Activated CD4-positive, alpha-beta memory T cell treated with anti-CD3 and anti-CD28 coated beads for 36 hours (primary cell): ENCODE measurements at regions of chr19 and their contacts with region 1.

Region 1: GRCh38 chr19:13846557-13847406 is 30.2 kb upstream of the NANOS3 start:
- DNase-seq: peak; percentile 98
- H3K4me3 Mint-ChIP-seq: peak overlapping the region; percentile 78
- H3K27ac Mint-ChIP-seq: peak overlapping the region; percentile 97
- H3K4me1 Mint-ChIP-seq: peaks cover 57% of the 10 kb centered on the region
- H3K27me3 Mint-ChIP-seq: no peaks in the 10 kb centered on the region

Region 2: DNA sequence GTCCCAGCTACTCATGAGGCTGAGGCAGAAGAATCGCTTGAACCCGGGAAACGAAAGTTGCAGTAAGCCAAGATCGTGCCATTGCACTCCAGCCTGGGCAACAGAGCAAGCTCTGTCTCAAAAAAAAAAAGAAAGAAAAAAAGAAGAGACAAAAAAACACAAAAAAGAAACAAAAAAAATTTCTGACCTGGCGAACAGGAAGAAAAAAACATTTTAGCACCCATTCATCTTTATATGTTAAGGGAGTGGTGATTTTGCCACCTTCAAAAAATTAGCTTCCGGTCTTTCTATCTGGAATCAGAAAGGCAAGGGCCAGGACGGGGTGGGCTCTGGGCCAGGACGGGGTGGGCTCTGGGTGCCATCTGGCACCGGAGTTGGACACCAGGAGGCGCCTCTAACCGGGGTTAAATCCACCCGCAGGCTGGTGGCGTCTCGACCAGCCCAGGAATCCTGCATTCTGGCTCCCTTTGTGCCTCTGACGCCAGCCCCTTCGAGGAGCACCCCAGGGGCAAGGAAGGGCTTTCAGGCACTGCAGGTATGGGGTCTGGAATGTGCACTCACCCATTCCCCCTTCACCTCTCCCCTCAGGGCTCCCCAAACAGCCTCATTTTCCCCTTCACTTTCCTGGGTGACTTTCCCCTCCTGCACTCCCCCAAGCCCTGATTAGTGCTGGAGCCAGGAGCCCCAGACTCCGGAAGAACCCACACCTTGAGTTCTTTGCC is 61.9 kb before region 1 on chr19:
- CTCF ChIA-PET with region 1: interaction called, 7 read pairs
- POLR2A ChIA-PET with region 1: interaction called, 10 read pairs
- intact Hi-C with region 1: no loop called
- DNase-seq: peak; percentile 86
- H3K4me3 Mint-ChIP-seq: peak overlapping the region; percentile 53
- H3K27ac Mint-ChIP-seq: peak overlapping the region; percentile 19
- H3K4me1 Mint-ChIP-seq: peaks cover 41% of the 10 kb centered on the region
- H3K27me3 Mint-ChIP-seq: no peaks in the 10 kb centered on the region

Region 3: GRCh38 chr19:13833330-13834243 is 13.2 kb before region 1 on chr19:
- CTCF ChIA-PET with region 1: interaction called, 11 read pairs
- POLR2A ChIA-PET with region 1: interaction called, 80 read pairs
- intact Hi-C with region 1: loop called (anchors 2 kb)
- DNase-seq: peak; percentile 97
- H3K4me3 Mint-ChIP-seq: peak overlapping the region; percentile 78
- H3K27ac Mint-ChIP-seq: peak overlapping the region; percentile 90
- H3K4me1 Mint-ChIP-seq: peaks cover 38% of the 10 kb centered on the region
- H3K27me3 Mint-ChIP-seq: no peaks in the 10 kb centered on the region

Region 4: DNA sequence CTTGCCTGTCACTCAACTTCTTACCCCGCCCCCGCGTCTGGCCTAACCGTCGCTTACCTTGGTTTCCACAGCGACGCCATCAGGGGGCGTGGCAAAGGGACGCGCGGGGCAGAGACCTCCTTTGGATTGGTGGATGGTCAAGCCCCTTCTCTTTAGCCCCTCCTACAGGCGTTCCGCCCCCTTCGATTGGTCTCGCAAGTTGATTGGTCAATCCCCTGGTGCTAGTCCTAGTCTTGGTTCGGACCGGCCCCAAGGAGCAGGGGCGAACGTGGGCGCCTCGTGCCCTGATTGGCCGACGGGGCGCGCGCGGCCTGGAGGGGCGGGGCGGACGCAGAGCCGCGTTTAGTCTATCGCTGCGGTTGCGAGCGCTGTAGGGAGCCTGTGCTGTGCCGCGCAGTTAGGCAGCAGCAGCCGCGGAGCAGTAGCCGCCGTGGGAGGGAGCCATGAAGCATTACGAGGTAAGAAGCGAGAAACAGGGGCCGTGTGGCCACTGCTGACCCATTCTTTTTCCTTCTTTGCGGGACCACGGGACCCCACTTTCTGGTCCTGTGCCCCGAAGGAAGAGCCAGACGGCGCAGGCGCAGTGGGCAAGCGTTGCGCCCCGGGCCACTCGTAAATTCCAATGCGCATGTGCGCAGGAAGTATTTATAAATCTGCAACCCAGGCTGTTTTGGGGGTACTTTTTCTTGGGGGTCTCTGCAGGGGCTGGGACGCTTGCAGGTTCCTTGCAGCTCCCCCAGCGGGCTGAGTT is 682.6 kb after region 1 on chr19 and contains the start of gene TECR:
- CTCF ChIA-PET with region 1: no interaction called
- POLR2A ChIA-PET with region 1: no interaction called
- intact Hi-C with region 1: loop called (anchors 10 kb)
- DNase-seq: peak; percentile 100
- H3K4me3 Mint-ChIP-seq: peak within 1 kb of the TSS; percentile 98
- H3K27ac Mint-ChIP-seq: peak within 1 kb of the TSS; percentile 95
- H3K4me1 Mint-ChIP-seq: peaks cover 33% of the 10 kb centered on the region
- H3K27me3 Mint-ChIP-seq: no peaks in the 10 kb centered on the region
- total RNA-seq, gene TECR: 120 TPM